ENCODE measurements at regions of chr11 and their contacts with region 1.

Region 1: GRCh38 chr11:13955971-13956421 is 6.5 kb upstream of the SPON1 start:
- DNase-seq: peak in 2 of 3 donors; percentile 43 to 75
- ATAC-seq: peak; percentile 87
- H3K4me3 ChIP-seq: no peak overlapping the region
- H3K4me1 ChIP-seq: no peaks in the 10 kb centered on the region
- CTCF ChIP-seq: peak; percentile 82

Region 2: DNA sequence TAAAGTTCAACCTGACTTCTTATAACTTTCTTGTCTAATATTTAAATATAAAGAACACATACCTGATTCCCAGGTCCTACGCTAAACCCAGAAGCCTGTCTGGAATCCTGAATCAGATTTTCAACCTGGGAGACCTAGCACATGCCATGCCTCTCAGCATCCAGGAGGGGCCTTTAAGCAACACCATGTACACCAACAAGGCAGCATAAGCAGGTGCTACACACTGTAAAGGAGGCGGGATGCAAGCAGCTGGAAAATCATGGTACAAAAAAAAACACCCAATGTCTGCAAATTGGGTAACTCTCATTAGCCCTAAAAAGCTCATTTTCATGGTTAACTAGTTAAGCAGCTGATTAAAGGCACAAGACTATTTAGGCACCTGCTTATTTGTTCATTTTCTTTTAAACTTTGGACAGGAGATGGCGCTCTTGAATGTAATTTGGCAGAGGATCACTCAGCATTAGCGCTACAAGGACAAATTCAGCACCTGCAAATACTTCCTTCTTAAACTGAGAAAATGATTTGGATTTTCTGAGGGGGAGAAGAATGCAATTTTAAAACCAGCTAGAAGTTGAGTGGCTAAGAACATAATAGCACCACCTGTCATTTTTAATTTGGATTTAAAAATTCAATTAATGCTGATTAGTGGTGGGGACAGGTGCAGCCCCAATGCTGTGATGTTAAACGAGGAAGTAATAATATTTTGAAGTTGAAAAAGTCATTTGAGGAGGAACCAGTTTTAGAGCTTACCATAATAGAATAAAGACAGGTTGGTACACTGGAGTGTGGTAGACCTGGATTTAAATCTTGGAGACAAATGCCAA is 183.6 kb before region 1 on chr11:
- intact Hi-C with region 1: loop called in 1 of 2 experiments (anchors 10 kb)
- DNase-seq: peak in 1 of 3 donors; percentile 64
- ATAC-seq: peak; percentile 60
- H3K4me3 ChIP-seq: no peak overlapping the region
- H3K4me1 ChIP-seq: no peaks in the 10 kb centered on the region
- CTCF ChIP-seq: no peak

Region 3: GRCh38 chr11:14148653-14149273 is 192.8 kb after region 1 on chr11:
- intact Hi-C with region 1: loop called (anchors 5 to 10 kb)
- DNase-seq: no peak
- ATAC-seq: peak; percentile 82
- H3K4me3 ChIP-seq: no peak overlapping the region
- H3K4me1 ChIP-seq: no peaks in the 10 kb centered on the region
- CTCF ChIP-seq: peak; percentile 42

Region 4: GRCh38 chr11:14249121-14249963 is 293.3 kb after region 1 on chr11:
- intact Hi-C with region 1: loop called (anchors 2 to 5 kb)
- DNase-seq: peak in 2 of 3 donors; percentile 41 to 75
- ATAC-seq: peak; percentile 81
- H3K4me3 ChIP-seq: no peak overlapping the region
- H3K4me1 ChIP-seq: peaks cover 7% of the 10 kb centered on the region
- CTCF ChIP-seq: peak; percentile 80

Measured in mucosa of descending colon (tissue), 3 donors.